ENCODE measurements at regions of chr12 and their contacts with region 1.

Region 1: DNA sequence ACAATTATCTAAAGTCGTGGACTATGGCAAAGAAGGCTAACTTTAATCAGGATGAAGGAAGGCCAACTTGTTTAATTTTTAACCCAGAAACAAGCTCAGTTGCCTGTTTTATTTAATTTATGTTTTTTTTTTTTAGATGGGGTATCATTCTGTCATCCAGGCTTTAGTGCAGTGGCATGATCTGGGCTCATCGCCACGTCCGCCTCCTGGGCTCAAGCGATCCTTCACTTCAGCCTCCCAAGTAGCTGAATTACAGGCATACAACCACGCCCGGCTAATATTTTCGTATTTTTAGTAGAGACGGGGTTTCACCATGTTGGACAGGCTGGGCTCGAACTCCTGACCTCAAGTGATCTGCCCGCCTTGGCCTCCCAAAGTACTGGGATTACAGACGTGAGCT is 19.7 kb downstream of the NUDT4 start:
- DNase-seq: no peak
- ATAC-seq: no peak
- H3K4me3 ChIP-seq: no peak overlapping the region
- H3K27ac ChIP-seq: no peak overlapping the region
- H3K4me1 ChIP-seq: no peaks in the 10 kb centered on the region
- H3K27me3 ChIP-seq: no peaks in the 10 kb centered on the region
- CTCF ChIP-seq: no peak
- POLR2A ChIP-seq: no peak
- RAD21 ChIP-seq: no peak

Region 2: GRCh38 chr12:92445253-92446082 is 951.9 kb before region 1 on chr12:
- CTCF ChIA-PET with region 1: no interaction called
- POLR2A ChIA-PET with region 1: no interaction called
- RAD21 ChIA-PET with region 1: no interaction called
- intact Hi-C with region 1: no loop called
- DNase-seq: no peak
- ATAC-seq: no peak
- H3K4me3 ChIP-seq: no peak overlapping the region
- H3K27ac ChIP-seq: no peak overlapping the region
- H3K4me1 ChIP-seq: no peaks in the 10 kb centered on the region
- H3K27me3 ChIP-seq: no peaks in the 10 kb centered on the region
- CTCF ChIP-seq: no peak
- POLR2A ChIP-seq: no peak
- RAD21 ChIP-seq: no peak

Region 3: DNA sequence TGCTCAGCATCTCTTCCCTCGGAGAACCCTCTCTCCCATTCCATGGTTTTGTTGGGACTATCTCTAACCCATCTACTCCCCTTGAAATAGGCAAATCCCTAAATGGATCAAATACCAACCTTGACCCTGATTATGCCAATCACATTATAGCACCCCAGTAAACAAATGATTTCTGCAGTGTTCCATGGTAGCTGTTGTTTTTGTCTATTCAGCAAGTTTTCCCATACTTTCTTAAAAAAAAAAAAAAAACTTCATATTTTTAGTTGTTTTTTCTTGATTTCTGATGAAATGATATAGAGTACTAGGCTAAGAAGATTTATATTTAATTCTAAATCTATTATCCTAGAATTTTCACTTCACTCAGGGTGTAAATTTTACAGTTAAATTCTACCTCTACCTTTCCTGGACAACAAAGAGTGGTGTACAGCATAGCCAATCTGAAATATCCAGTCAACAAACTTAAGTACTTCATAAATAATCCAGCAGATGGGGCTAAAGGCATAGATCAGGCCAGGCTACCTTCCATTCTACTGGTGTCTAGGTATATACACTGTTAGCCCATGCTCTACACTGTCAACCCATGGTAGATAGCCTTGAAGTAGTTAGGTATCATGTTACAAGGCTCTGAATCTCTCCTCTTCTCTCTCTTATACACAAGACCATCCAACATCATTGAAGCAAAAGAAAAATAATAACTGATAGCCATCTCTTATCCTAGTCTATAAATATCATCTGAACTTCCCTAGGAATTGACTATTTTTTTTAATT is 612.4 kb before region 1 on chr12:
- CTCF ChIA-PET with region 1: interaction called, 4 read pairs
- POLR2A ChIA-PET with region 1: no interaction called
- RAD21 ChIA-PET with region 1: interaction called in 1 of 2 experiments, 4 read pairs
- intact Hi-C with region 1: loop called (anchors 2 kb)
- DNase-seq: peak; percentile 72
- ATAC-seq: peak; percentile 100
- H3K4me3 ChIP-seq: no peak overlapping the region
- H3K27ac ChIP-seq: no peak overlapping the region
- H3K4me1 ChIP-seq: no peaks in the 10 kb centered on the region
- H3K27me3 ChIP-seq: no peaks in the 10 kb centered on the region
- CTCF ChIP-seq: peak; percentile 49 to 76 (median 62); a peak in 5 of 6 replicates
- POLR2A ChIP-seq: no peak
- RAD21 ChIP-seq: peak; percentile 92

Region 4: GRCh38 chr12:93025145-93025805 is 372.1 kb before region 1 on chr12:
- CTCF ChIA-PET with region 1: interaction called, 4 read pairs
- POLR2A ChIA-PET with region 1: no interaction called
- RAD21 ChIA-PET with region 1: no interaction called
- intact Hi-C with region 1: loop called (anchors 2 kb)
- DNase-seq: peak; percentile 45
- ATAC-seq: peak; percentile 82
- H3K4me3 ChIP-seq: no peak overlapping the region
- H3K27ac ChIP-seq: no peak overlapping the region
- H3K4me1 ChIP-seq: peaks cover 0 to 6% of the 10 kb centered on the region in 2 experiments; a peak in 3 of 4 replicates
- H3K27me3 ChIP-seq: no peaks in the 10 kb centered on the region
- CTCF ChIP-seq: peak; percentile 49 to 64 (median 54); a peak in 5 of 6 replicates
- POLR2A ChIP-seq: no peak
- RAD21 ChIP-seq: peak; percentile 81